ENCODE measurements at regions of chr9 and their contacts with region 1.

Region 1: GRCh38 chr9:36008774-36009300 is 27.9 kb upstream of the RECK start:
- DNase-seq: peak; percentile 74
- H3K4me3 Mint-ChIP-seq: no peak overlapping the region
- H3K27ac Mint-ChIP-seq: no peak overlapping the region
- H3K4me1 Mint-ChIP-seq: peaks cover 22% of the 10 kb centered on the region
- H3K27me3 Mint-ChIP-seq: peaks cover 5% of the 10 kb centered on the region

Region 2: DNA sequence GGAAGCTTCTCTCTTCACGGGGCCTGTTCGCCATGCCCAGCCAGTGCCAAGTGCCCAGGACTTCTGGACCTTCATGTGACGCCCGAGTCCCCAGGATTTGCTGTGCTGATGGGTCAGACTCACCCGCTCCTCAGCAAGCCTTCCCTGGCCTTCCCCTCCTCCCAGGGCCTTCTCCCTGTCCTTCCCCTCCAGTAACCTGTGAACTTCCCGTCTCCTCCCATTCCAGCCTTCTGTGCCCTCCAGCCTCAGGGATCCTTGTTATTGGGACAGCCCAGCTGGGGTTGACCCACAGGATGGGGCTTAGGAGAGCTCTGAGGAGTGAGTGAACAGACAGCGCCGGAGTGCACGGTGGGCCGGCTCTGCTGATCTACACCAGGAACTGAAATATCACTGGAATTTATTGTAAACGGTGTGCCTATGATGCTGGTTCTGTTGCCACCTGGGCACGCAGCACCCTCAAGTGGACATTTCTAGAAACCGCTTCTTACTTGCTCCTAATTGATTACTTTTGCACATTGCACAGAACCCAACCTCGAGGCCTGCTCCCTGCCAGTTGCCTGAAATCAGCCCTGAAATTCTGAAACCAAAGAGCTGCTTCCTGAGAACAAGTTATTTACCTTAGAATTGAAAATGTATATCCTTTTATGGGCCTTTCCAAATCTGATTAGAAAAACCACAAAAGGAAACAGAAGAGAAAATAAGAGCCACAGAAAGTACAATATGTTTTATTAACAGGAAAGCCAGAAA is 98.1 kb before region 1 on chr9:
- CTCF ChIA-PET with region 1: no interaction called
- intact Hi-C with region 1: loop called (anchors 5 kb)
- DNase-seq: peak; percentile 69
- H3K4me3 Mint-ChIP-seq: no peak overlapping the region
- H3K27ac Mint-ChIP-seq: peak overlapping the region; percentile 27
- H3K4me1 Mint-ChIP-seq: peaks cover 59% of the 10 kb centered on the region
- H3K27me3 Mint-ChIP-seq: no peaks in the 10 kb centered on the region

Region 3: GRCh38 chr9:35993976-35994720 is 14.7 kb before region 1 on chr9:
- CTCF ChIA-PET with region 1: interaction called, 13 read pairs
- intact Hi-C with region 1: no loop called
- DNase-seq: no peak
- H3K4me3 Mint-ChIP-seq: no peak overlapping the region
- H3K27ac Mint-ChIP-seq: no peak overlapping the region
- H3K4me1 Mint-ChIP-seq: no peaks in the 10 kb centered on the region
- H3K27me3 Mint-ChIP-seq: peaks cover 5% of the 10 kb centered on the region

Region 4: GRCh38 chr9:36029765-36030528 is 21.1 kb after region 1 on chr9:
- CTCF ChIA-PET with region 1: interaction called, 107 read pairs
- intact Hi-C with region 1: no loop called
- DNase-seq: no peak
- H3K4me3 Mint-ChIP-seq: no peak overlapping the region
- H3K27ac Mint-ChIP-seq: no peak overlapping the region
- H3K4me1 Mint-ChIP-seq: no peaks in the 10 kb centered on the region
- H3K27me3 Mint-ChIP-seq: no peaks in the 10 kb centered on the region

Region 5: DNA sequence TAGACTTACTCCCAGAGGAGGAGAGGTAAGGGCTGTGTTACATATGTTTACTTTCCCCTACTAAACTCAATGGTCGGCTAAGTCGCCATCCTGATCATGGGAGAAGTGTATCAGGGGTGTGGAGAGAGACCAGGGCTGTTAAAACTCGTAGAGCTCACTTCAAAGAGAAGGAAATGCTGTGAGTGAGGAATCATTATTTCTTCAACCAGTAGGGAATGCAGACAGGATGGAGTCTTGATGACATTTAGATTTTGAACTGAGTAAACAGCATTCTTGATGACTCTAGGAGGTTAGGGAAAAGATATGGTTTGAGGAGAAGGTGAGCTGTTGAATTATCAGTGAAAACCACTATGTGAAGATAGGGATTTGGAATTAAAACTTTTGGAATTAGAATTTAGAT is 45.1 kb after region 1 on chr9:
- CTCF ChIA-PET with region 1: interaction called, 3 read pairs
- intact Hi-C with region 1: loop called (anchors 5 kb)
- DNase-seq: no peak
- H3K4me3 Mint-ChIP-seq: no peak overlapping the region
- H3K27ac Mint-ChIP-seq: no peak overlapping the region
- H3K4me1 Mint-ChIP-seq: no peaks in the 10 kb centered on the region
- H3K27me3 Mint-ChIP-seq: no peaks in the 10 kb centered on the region

Region 6: DNA sequence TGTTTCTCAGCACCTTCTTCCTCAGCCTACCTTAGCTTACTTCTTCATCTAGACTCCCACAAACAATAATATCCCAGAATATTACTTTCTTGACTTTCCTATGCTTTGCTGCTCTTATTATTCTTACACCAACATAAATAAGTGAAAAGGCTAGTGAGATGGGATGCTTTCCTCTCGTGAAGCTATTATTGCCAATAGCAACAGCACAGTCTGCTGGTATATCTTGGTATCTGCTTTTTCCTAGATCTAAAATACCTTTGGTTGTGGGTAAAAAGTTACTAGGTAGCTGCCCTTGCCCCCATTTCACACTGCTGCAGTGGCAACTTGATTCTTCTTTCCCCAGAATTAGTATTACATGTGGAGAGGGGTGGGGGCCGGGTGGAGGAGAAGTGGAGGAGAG is 101.6 kb after region 1 on chr9:
- CTCF ChIA-PET with region 1: no interaction called
- intact Hi-C with region 1: no loop called
- DNase-seq: no peak
- H3K4me3 Mint-ChIP-seq: no peak overlapping the region
- H3K27ac Mint-ChIP-seq: no peak overlapping the region
- H3K4me1 Mint-ChIP-seq: peaks cover 10% of the 10 kb centered on the region
- H3K27me3 Mint-ChIP-seq: no peaks in the 10 kb centered on the region

Measured in activated naive CD4-positive, alpha-beta T cell treated with anti-CD3 and anti-CD28 coated beads for 36 hours (primary cell).